SK-N-SH (cell line): ENCODE measurements at regions of chr2 and their contacts with region 1.

Region 1: GRCh38 chr2:135709992-135710391 is 31.7 kb upstream of the UBXN4 start:
- DNase-seq: peak; percentile 73
- H3K4me3 ChIP-seq: no peak overlapping the region; a peak in 1 of 4 replicates
- H3K27ac ChIP-seq: no peak overlapping the region
- H3K4me1 ChIP-seq: no peaks in the 10 kb centered on the region
- H3K27me3 ChIP-seq: no peaks in the 10 kb centered on the region
- CTCF ChIP-seq: peak; percentile 97
- EP300 ChIP-seq: no peak
- RAD21 ChIP-seq: peak; percentile 94

Region 2: DNA sequence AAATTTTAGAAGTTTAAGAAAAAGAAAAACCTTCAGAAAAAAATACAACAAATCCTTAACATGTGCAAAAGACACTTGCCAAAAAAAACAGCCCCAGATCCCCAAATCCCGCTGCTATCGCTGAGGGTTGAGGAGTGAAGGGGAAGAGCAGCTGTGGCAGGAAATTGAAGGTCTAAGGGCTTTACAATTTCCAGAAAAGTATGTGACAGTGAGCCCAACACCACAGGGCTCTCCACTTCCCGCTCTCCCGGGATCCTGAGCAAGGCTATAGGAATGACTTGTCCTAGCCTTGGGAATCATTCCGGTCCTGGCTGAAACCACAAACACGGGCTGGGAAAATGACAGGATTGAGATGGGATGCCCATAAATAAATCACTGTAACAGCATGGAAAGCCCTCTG is 1182.6 kb before region 1 on chr2:
- CTCF ChIA-PET with region 1: no interaction called
- POLR2A ChIA-PET with region 1: no interaction called
- DNase-seq: no peak
- H3K4me3 ChIP-seq: no peak overlapping the region
- H3K27ac ChIP-seq: no peak overlapping the region; a peak in 1 of 4 replicates
- H3K4me1 ChIP-seq: peaks cover 0 to 20% of the 10 kb centered on the region in 2 experiments; a peak in 2 of 4 replicates
- H3K27me3 ChIP-seq: no peaks in the 10 kb centered on the region
- CTCF ChIP-seq: no peak
- EP300 ChIP-seq: no peak
- RAD21 ChIP-seq: no peak

Region 3: GRCh38 chr2:134988994-134989605 is 720.9 kb before region 1 on chr2:
- CTCF ChIA-PET with region 1: interaction called, 28 read pairs
- POLR2A ChIA-PET with region 1: no interaction called
- DNase-seq: peak; percentile 42
- H3K4me3 ChIP-seq: no peak overlapping the region
- H3K27ac ChIP-seq: no peak overlapping the region
- H3K4me1 ChIP-seq: no peaks in the 10 kb centered on the region
- H3K27me3 ChIP-seq: no peaks in the 10 kb centered on the region
- CTCF ChIP-seq: peak; percentile 66
- EP300 ChIP-seq: no peak
- RAD21 ChIP-seq: peak; percentile 72

Region 4: GRCh38 chr2:135004005-135004746 is 705.8 kb before region 1 on chr2:
- CTCF ChIA-PET with region 1: interaction called, 139 read pairs
- POLR2A ChIA-PET with region 1: interaction called, 4 read pairs
- DNase-seq: peak; percentile 80
- H3K4me3 ChIP-seq: no peak overlapping the region; a peak in 1 of 4 replicates
- H3K27ac ChIP-seq: no peak overlapping the region
- H3K4me1 ChIP-seq: peaks cover 0 to 3% of the 10 kb centered on the region in 2 experiments; a peak in 1 of 4 replicates
- H3K27me3 ChIP-seq: no peaks in the 10 kb centered on the region
- CTCF ChIP-seq: peak; percentile 97
- EP300 ChIP-seq: no peak
- RAD21 ChIP-seq: peak; percentile 99

Region 5: DNA sequence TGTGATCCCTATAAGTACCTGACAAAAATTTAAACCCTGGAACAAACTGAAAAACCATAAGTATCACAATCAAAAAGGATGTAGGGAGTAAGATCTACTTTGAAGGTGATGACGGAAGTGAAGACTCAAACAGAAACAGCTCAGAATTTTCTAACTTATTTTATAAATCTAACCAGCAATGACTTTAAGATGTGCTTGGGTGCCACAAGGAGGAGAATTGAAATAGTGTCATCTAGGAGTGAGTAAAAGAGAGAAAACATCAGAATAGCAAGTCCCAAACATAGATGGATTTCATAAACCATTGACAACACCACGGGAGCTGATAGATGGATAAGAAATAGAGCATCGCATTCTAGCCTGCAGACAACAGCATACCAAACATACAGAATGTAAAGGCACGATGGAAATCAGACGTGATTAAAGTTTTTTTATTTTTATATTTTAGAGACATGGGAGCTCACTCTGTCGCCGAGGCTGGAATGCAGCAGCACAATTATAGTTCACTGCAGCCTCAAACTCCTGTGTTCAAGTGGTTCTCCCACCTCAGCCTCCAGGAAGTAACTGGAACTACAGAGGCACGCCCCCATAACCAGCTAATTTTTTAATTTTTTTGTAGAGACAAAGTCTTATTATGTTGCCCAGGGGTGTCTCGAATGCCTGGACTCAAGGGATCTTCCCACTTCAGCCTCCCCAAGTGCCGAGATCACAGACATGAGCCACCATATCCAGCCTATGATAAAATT is 699.6 kb before region 1 on chr2:
- CTCF ChIA-PET with region 1: interaction called, 139 read pairs
- POLR2A ChIA-PET with region 1: no interaction called
- DNase-seq: no peak
- H3K4me3 ChIP-seq: no peak overlapping the region
- H3K27ac ChIP-seq: no peak overlapping the region
- H3K4me1 ChIP-seq: no peaks in the 10 kb centered on the region
- H3K27me3 ChIP-seq: no peaks in the 10 kb centered on the region
- CTCF ChIP-seq: no peak
- EP300 ChIP-seq: no peak
- RAD21 ChIP-seq: no peak

Region 6: GRCh38 chr2:135473567-135473966 is 236.4 kb before region 1 on chr2:
- CTCF ChIA-PET with region 1: interaction called, 23 read pairs
- POLR2A ChIA-PET with region 1: no interaction called
- DNase-seq: peak; percentile 37
- H3K4me3 ChIP-seq: no peak overlapping the region
- H3K27ac ChIP-seq: no peak overlapping the region
- H3K4me1 ChIP-seq: no peaks in the 10 kb centered on the region
- H3K27me3 ChIP-seq: no peaks in the 10 kb centered on the region
- CTCF ChIP-seq: peak; percentile 59
- EP300 ChIP-seq: no peak
- RAD21 ChIP-seq: peak; percentile 63

Region 7: DNA sequence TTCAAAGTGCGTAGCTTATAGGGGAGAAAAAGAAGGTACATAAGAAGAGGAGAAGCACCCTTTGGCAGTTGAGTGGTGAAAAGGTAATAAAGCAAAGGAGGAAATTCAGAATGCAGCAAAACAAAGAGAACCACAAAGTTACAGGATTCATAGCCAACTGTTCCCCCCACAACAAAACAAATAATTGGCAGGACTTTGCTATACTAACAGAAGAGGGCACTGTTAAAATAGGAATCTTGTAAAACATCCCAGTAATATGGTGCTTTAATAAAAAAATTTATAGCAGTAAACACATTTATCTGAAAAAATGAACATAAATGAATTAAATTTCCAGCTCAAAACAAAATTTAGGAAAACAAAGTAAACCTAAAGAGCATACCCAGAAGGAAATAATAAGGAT is 136.4 kb before region 1 on chr2:
- CTCF ChIA-PET with region 1: interaction called, 12 read pairs
- POLR2A ChIA-PET with region 1: no interaction called
- DNase-seq: no peak
- H3K4me3 ChIP-seq: no peak overlapping the region
- H3K27ac ChIP-seq: no peak overlapping the region
- H3K4me1 ChIP-seq: no peaks in the 10 kb centered on the region
- H3K27me3 ChIP-seq: no peaks in the 10 kb centered on the region
- CTCF ChIP-seq: peak; percentile 25
- EP300 ChIP-seq: no peak
- RAD21 ChIP-seq: peak; percentile 15; the same call in 1 of the 2 replicates

Region 8: GRCh38 chr2:135742325-135742757 is 32.3 kb after region 1 on chr2:
- CTCF ChIA-PET with region 1: interaction called, 11 read pairs
- POLR2A ChIA-PET with region 1: no interaction called
- DNase-seq: no peak
- H3K4me3 ChIP-seq: peak overlapping the region; percentile 79 to 84
- H3K27ac ChIP-seq: peak overlapping the region; percentile 92 to 95
- H3K4me1 ChIP-seq: peaks cover 8 to 15% of the 10 kb centered on the region in 2 experiments; a peak in 3 of 4 replicates
- H3K27me3 ChIP-seq: no peaks in the 10 kb centered on the region
- CTCF ChIP-seq: no peak
- EP300 ChIP-seq: no peak
- RAD21 ChIP-seq: no peak